SK-N-SH (cell line): ENCODE measurements at regions of chr9 and their contacts with region 1.

Region 1: DNA sequence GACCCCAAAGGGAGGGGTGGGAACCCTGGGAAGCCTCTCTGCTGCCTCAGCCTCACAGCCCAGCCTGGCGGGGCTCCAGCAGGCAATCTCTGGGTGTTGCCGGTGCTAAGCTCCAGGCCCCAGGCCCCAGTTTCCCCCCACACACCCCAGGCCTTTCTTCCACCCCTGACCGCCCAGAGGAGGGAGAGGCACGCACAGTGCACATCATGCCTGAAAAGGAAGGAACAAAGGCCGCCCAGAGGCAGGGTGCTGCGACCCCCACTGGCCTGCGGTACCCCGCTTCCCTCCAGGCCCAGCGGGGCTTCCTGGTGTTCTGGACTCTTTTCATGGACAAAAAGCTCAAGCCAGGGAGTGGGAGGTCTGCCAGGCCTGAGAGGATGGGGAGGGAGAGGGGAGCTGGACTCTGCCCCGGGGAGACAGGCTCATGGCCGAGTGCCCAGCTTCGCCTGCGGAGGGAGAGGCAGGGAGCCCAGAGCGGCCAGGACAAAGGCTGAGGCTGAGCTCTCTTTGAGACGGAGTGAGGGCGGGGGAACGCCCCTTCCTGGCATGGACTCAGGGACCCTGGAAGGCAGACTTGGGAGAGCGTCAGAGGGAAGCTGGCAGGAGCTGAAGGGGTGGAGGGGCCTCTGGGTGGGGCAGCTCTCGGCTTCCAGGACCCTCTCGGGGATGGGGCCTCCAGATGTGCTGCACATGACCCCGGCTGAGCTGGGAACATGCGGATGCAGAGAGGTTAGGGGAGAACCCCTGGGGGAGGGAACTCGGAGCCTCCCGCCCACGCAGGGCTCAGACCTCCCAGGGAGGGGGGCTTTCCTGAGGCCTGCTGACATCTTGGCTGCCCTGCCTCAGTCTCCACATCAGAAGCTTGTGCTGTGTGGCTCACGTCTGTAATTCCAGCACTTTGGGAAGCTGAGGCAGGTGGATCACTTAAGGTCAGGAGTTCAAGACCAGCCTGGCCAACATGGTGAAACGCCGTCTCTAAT is 1.8 kb upstream of the ENTPD2 start:
- DNase-seq: peak; percentile 94
- H3K4me3 ChIP-seq: no peak overlapping the region
- H3K27ac ChIP-seq: peak overlapping the region; percentile 32 to 96; a peak in 3 of 4 replicates
- H3K4me1 ChIP-seq: peaks cover 0 to 29% of the 10 kb centered on the region in 2 experiments; a peak in 2 of 4 replicates
- H3K27me3 ChIP-seq: no peaks in the 10 kb centered on the region
- CTCF ChIP-seq: no peak
- EP300 ChIP-seq: peak in 1 of 2 experiments; percentile 66; a peak in 2 of 4 replicates
- RAD21 ChIP-seq: peak; percentile 20; the same call in 1 of the 2 replicates

Region 2: GRCh38 chr9:137077010-137077747 is 21.5 kb after region 1 on chr9 and contains the start of gene UAP1L1:
- CTCF ChIA-PET with region 1: interaction called, 803 read pairs
- POLR2A ChIA-PET with region 1: interaction called, 9 read pairs
- DNase-seq: peak; percentile 85
- H3K4me3 ChIP-seq: peak within 1 kb of the TSS; percentile 57 to 60
- H3K27ac ChIP-seq: no peak within 1 kb of the TSS
- H3K4me1 ChIP-seq: peaks cover 0 to 11% of the 10 kb centered on the region in 2 experiments; a peak in 1 of 4 replicates
- H3K27me3 ChIP-seq: no peaks in the 10 kb centered on the region
- CTCF ChIP-seq: no peak
- EP300 ChIP-seq: no peak
- RAD21 ChIP-seq: no peak
- polyA plus RNA-seq, gene UAP1L1: 3.2 and 5.6 TPM in 2 replicates